ENCODE measurements at regions of chr15 and their contacts with region 1.

Region 1: GRCh38 chr15:80309769-80310384 is 57.9 kb upstream of the CTXND1 start:
- DNase-seq: no peak
- ATAC-seq: peak; percentile 82

Region 2: DNA sequence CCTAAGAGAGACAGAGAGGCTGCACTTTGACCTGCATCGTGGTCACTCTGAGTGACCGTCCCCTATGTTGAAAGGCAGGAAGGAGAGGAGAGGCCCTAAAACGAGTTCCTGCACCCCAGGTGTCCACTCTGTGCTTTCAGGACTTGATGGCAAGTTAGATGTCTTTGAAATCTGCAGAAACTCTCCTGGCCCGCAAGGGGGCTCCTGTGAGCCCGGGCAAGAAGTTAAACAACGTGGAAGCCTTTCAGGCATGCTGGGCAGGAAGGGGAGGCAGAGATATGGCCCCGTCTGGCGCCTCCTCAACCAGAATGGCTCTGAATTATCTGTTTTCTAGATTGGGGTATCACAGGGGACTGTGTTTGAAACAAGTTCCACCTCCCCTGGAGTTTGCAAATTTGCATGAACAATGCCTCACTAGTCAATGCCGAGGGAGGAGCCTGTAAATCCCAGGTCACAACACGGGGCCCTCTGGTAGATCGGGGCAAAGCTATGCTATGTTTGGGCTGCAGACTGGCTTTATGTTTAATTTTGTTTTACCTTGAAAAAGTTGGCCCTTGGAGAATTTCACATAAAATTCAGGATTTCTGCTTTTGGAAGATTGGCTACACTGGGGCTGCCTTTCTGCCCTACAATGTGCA is 67.6 kb before region 1 on chr15:
- intact Hi-C with region 1: loop called (anchors 5 kb)
- DNase-seq: no peak
- ATAC-seq: peak; percentile 51

Region 3: GRCh38 chr15:80445300-80446041 is 135.6 kb after region 1 on chr15:
- intact Hi-C with region 1: no loop called
- DNase-seq: no peak
- ATAC-seq: no peak

Region 4: DNA sequence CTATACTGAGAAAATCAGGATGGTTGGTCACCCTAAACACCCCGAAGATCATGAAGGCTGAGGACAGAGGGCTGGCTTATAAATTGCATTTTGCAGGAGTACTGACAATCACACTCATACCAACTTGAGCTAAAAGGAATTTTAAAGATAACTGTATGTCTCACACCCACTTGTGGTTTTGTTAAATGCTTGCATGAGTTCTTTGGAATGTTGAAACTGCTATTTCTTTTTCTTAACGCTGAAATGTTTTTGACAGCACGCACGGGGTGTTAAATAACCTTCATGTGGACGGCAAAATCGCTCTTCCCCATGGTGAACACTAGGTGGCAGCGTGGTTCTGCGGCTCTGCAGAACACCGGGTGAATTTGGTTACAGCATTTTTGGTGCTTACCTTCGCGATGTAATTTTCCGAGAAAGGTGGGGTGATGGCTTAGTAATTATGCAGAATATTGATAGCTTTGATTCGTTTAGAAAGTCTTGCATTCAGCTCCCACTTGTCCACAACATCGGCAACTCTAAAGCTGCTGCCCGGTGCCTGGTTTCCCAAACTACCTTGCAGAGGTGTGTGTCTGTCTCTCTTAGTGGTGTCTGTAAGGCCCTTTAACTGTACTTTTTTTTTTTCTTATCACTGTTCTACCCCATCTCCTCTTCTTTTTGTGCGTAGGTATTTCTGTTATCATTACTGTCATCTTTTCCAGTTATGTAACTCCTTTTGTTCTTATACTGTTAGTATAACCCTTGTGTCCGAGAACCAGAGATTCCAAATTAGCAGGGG is 146.0 kb after region 1 on chr15:
- intact Hi-C with region 1: no loop called
- DNase-seq: peak; percentile 52
- ATAC-seq: peak; percentile 85

Region 5: GRCh38 chr15:80512726-80513660 is 203.1 kb after region 1 on chr15:
- intact Hi-C with region 1: no loop called
- DNase-seq: no peak
- ATAC-seq: peak; percentile 63

Region 6: DNA sequence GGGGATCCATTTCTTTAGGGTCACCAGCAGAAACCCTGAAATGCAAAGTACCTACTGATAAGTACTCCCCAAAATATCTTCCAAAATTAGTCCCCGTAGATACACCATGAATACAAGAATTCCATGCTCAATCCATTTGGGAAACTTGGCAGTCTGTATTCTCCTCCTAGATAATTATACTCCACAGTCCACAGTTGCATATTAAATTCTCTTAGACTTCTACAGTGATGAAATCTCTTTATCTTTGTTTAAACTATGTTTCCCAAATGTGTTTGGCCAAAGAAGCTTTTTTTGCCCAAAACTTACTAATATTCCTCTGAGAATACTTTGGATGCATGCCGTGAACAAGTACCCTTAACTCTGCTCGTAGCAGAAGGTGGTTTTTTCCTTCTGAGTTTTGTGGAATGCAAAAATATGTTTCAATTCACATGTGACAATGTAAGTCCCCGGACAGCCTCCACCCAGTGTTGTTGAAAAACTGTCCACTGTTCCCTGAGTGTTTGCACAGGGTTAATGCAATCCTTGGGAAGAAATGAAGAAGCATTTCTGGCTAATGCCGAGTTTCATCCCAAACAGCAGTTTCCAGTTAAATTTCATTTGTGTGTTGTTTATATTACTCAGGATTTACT is 221.0 kb after region 1 on chr15:
- intact Hi-C with region 1: no loop called
- DNase-seq: no peak
- ATAC-seq: peak; percentile 61

Measured in Right ventricle myocardium superior (tissue), 1 donor.